ENCODE measurements at regions of chr12 and their contacts with region 1.

Region 1: DNA sequence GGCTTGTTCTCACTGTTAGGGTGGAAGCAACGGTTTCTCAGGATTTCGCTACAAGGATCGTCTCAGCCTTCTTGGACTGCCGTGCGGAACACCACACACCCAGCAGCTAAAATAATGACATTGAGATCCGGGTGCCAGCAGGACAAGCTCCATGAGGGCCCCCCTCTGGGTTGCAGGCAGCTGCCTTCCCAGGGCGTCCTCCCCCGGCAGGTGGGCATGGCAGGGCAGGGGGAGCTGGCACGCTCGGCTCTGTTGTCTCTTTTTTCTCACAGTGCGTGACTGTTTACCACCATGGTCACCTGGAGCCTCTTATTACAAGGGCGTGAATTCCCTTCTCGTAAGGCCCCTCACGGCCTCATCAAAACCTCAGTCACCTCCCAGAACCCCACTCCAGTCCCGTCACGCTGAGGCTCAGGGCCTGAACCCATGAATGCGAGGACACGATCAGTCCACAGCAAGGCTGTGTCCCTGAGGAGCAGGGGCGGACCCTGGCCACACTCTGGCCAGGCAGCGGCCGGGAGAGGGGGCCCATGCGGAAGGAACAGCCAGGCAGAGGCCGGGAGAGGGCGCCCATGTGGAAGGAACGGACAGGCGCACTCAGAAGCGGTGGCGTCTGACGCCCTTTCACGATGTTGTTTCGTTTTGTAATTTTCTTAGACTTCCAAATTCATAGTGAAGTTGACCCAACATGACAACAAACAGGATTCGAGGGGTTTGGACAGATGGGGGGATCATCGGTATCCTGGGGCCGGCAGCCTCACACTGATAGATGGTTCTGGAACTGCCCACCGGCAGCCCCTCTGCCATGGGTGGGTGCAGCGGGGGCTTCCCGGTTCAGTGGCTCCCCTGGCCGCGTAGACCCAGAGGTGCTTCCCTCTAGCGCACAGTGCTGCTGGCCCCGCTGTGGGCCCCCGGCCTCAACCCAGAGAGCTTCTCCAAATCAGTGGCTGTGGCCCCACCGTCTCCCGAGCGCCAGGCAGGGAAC is 10.0 kb downstream of the LRCOL1 start:
- DNase-seq: peak; percentile 70
- ATAC-seq: peak; percentile 69
- H3K4me3 Mint-ChIP-seq: peak overlapping the region; percentile 15
- H3K27ac Mint-ChIP-seq: no peak overlapping the region
- H3K4me1 Mint-ChIP-seq: peaks cover 15% of the 10 kb centered on the region
- H3K27me3 Mint-ChIP-seq: peaks cover 44% of the 10 kb centered on the region

Region 2: GRCh38 chr12:132614861-132615578 is 14.7 kb after region 1 on chr12:
- CTCF ChIA-PET with region 1: interaction called, 10 read pairs
- POLR2A ChIA-PET with region 1: no interaction called
- intact Hi-C with region 1: loop called (anchors 1 to 2 kb)
- DNase-seq: peak; percentile 90
- ATAC-seq: peak; percentile 91
- H3K4me3 Mint-ChIP-seq: no peak overlapping the region
- H3K27ac Mint-ChIP-seq: no peak overlapping the region
- H3K4me1 Mint-ChIP-seq: peaks cover 15% of the 10 kb centered on the region
- H3K27me3 Mint-ChIP-seq: peaks cover 33% of the 10 kb centered on the region